ENCODE measurements at regions of chr18 and their contacts with region 1.

Region 1: GRCh38 chr18:52387175-52387574 is 47.2 kb downstream of the DCC start:
- DNase-seq: peak; percentile 93
- H3K4me3 ChIP-seq: no peak overlapping the region
- H3K27ac ChIP-seq: peak overlapping the region; percentile 98
- H3K4me1 ChIP-seq: peaks cover 95% of the 10 kb centered on the region
- H3K27me3 ChIP-seq: no peaks in the 10 kb centered on the region
- CTCF ChIP-seq: no peak

Region 2: GRCh38 chr18:51171223-51171622 is 1216.0 kb before region 1 on chr18:
- CTCF ChIA-PET with region 1: no interaction called
- POLR2A ChIA-PET with region 1: no interaction called
- intact Hi-C with region 1: no loop called
- DNase-seq: no peak
- H3K4me3 ChIP-seq: no peak overlapping the region
- H3K27ac ChIP-seq: no peak overlapping the region
- H3K4me1 ChIP-seq: peaks cover 21% of the 10 kb centered on the region
- H3K27me3 ChIP-seq: no peaks in the 10 kb centered on the region
- CTCF ChIP-seq: no peak

Region 3: GRCh38 chr18:51621113-51621863 is 765.9 kb before region 1 on chr18:
- CTCF ChIA-PET with region 1: no interaction called
- POLR2A ChIA-PET with region 1: no interaction called
- intact Hi-C with region 1: loop called (anchors 5 kb)
- DNase-seq: peak; percentile 85
- H3K4me3 ChIP-seq: no peak overlapping the region
- H3K27ac ChIP-seq: no peak overlapping the region
- H3K4me1 ChIP-seq: peaks cover 14% of the 10 kb centered on the region
- H3K27me3 ChIP-seq: no peaks in the 10 kb centered on the region
- CTCF ChIP-seq: peak; percentile 88

Region 4: DNA sequence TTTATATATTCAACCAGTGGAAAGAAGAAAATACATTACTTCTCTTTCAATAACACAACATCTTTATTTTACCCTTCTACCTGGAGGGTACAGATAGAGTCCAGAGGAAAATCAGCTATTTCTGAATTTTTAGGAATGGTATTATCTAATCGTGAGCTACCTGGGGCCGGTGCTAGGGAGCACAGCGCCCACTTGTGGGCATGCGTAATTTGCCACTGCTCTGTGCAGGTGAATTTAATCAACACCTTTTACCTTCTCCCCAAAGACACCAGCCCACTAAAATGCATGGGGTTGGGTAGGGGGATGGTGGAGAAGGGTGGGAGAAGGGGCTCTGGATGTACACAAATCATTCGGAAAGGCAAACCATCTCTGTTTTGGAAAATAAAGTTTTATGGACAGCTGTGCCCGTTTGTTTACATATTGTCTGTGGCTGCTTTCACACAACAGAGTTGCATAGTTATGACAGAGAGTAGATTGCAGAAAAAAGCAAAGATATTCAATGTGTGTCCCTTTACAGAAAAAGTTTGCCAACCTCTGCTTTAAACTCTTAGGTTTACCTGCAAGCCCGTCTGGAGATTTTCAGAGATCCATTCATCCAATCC is 98.7 kb before region 1 on chr18:
- CTCF ChIA-PET with region 1: no interaction called
- POLR2A ChIA-PET with region 1: no interaction called
- intact Hi-C with region 1: loop called (anchors 2 kb)
- DNase-seq: peak; percentile 23
- H3K4me3 ChIP-seq: no peak overlapping the region
- H3K27ac ChIP-seq: no peak overlapping the region
- H3K4me1 ChIP-seq: peaks cover 35% of the 10 kb centered on the region
- H3K27me3 ChIP-seq: no peaks in the 10 kb centered on the region
- CTCF ChIP-seq: peak; percentile 86